Activated CD4-positive, alpha-beta T cell treated with anti-CD3 and anti-CD28 coated beads, Interleukin-2, amount 10 ng/mL, durations not matched to agents 24 days and 14 days (primary cell): ENCODE measurements at regions of chr20 and their contacts with region 1.

Region 1: GRCh38 chr20:51512645-51513044 is 29.9 kb downstream of the NFATC2 start:
- DNase-seq: peak; percentile 81
- H3K4me3 Mint-ChIP-seq: peak overlapping the region; percentile 31
- H3K27ac Mint-ChIP-seq: peak overlapping the region; percentile 84
- H3K4me1 Mint-ChIP-seq: peaks cover 66% of the 10 kb centered on the region
- H3K27me3 Mint-ChIP-seq: no peaks in the 10 kb centered on the region

Region 2: DNA sequence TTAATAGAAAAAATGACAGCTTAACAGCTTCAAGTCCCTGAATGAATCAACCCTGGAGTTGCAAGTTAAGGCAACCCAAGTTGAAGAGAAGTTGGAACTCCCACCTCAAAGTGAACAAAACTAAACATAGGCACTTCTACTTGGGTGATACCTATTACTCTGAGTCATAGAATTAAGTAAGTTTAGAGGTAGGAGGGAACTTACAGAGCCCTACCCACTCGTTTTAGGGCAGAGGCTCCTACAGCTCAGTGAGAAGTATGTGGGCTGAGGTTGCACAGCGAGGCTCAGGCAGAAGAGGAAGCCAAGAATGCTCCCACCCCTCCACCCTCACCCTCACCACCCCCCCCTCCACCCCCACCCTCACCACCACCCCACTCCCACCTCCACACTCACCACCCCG is 12.3 kb before region 1 on chr20:
- intact Hi-C with region 1: loop called (anchors 1 kb)
- DNase-seq: peak; percentile 85
- H3K4me3 Mint-ChIP-seq: peak overlapping the region; percentile 27
- H3K27ac Mint-ChIP-seq: peak overlapping the region; percentile 85
- H3K4me1 Mint-ChIP-seq: peaks cover 72% of the 10 kb centered on the region
- H3K27me3 Mint-ChIP-seq: no peaks in the 10 kb centered on the region